HEK293 (cell line): ENCODE measurements at regions of chr15 and their contacts with region 1.

Region 1: GRCh38 chr15:68304589-68305337 is 27.2 kb downstream of the FEM1B start:
- H3K4me3 ChIP-seq: no peak overlapping the region
- H3K27ac ChIP-seq: no peak overlapping the region
- H3K4me1 ChIP-seq: no peaks in the 10 kb centered on the region
- CTCF ChIP-seq: no peak

Region 2: DNA sequence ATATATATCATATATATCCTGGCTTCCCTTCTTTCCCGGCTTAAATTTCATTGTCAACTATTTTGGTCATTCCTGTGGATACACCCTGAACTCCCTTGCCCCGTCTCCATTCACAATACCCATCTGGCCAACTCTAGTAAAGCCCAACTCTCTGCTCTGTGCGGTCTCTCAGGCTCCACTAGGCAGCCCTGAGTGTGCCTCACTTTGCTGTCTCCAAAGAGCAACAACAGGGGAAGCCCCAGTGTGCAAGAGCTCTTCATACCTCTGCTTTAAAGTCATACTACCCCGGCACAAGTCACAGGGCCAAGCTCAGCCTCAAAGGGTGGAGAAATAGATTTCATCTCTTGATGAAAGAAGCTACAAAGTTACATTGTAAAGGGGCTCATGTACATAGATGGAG is 46.1 kb before region 1 on chr15:
- CTCF ChIA-PET with region 1: interaction called, 158 read pairs
- POLR2A ChIA-PET with region 1: no interaction called
- H3K4me3 ChIP-seq: no peak overlapping the region
- H3K27ac ChIP-seq: no peak overlapping the region
- H3K4me1 ChIP-seq: no peaks in the 10 kb centered on the region
- CTCF ChIP-seq: no peak

Region 3: GRCh38 chr15:68316061-68316804 is 11.5 kb after region 1 on chr15:
- CTCF ChIA-PET with region 1: interaction called, 19 read pairs
- POLR2A ChIA-PET with region 1: no interaction called
- H3K4me3 ChIP-seq: no peak overlapping the region
- H3K27ac ChIP-seq: no peak overlapping the region
- H3K4me1 ChIP-seq: no peaks in the 10 kb centered on the region
- CTCF ChIP-seq: peak; percentile 79

Region 4: GRCh38 chr15:68344598-68344997 is 39.8 kb after region 1 on chr15:
- CTCF ChIA-PET with region 1: interaction called, 10 read pairs
- POLR2A ChIA-PET with region 1: no interaction called
- H3K4me3 ChIP-seq: no peak overlapping the region
- H3K27ac ChIP-seq: no peak overlapping the region
- H3K4me1 ChIP-seq: no peaks in the 10 kb centered on the region
- CTCF ChIP-seq: no peak

Region 5: GRCh38 chr15:68383161-68384074 is 78.7 kb after region 1 on chr15:
- CTCF ChIA-PET with region 1: interaction called, 10 read pairs
- POLR2A ChIA-PET with region 1: no interaction called
- H3K4me3 ChIP-seq: no peak overlapping the region
- H3K27ac ChIP-seq: no peak overlapping the region
- H3K4me1 ChIP-seq: no peaks in the 10 kb centered on the region
- CTCF ChIP-seq: peak; percentile 46; the same call in 1 of the 2 replicates

Region 6: DNA sequence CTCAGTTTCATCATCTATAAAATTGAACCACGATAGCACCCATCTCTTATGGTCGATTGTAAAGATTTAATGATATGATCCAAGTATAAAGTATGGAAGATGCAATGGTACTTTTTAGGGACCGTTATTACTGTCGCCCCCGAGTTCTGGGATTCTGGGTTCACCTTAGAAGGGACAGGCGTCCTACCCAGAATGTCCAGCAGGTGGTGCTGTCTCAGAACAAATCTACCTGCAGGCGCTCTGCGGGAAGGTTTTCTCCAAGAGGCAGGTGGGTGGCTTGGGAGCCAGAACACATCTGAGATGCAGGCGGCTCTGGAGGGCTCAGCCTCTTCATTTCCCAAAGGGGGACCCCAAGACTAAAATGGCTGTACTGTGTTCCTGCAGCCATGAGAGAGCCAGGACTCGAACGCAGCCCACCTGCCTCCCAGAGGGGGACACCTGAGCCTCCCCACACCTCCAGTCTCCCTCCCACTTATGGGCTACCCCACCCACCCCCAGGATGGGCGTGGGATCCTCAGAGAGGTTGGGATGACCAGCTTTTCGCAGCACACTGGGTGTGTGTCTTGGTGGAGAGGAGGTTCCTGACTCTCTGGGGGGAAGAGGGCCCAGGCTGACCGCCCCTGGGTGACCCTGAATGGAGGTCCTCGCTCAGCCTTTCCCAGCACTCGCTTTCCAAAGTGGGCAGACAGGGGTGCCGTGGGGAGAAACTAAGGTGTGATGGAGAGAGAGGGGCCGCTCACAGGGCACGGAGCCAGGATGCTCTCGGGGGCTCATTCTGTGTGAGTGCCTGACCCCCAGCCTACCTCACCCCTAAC is 245.9 kb after region 1 on chr15:
- CTCF ChIA-PET with region 1: interaction called, 57 read pairs
- POLR2A ChIA-PET with region 1: interaction called, 3 read pairs
- H3K4me3 ChIP-seq: no peak overlapping the region
- H3K27ac ChIP-seq: no peak overlapping the region
- H3K4me1 ChIP-seq: no peaks in the 10 kb centered on the region
- CTCF ChIP-seq: peak; percentile 78